Panc1 (cell line): ENCODE measurements at regions of chr1 and their contacts with region 1.

Region 1: GRCh38 chr1:169853341-169853740 is 40.4 kb downstream of the SCYL3 start:
- DNase-seq: no peak
- ATAC-seq: no peak
- H3K4me3 ChIP-seq: no peak overlapping the region
- H3K27ac ChIP-seq: no peak overlapping the region
- H3K4me1 ChIP-seq: no peaks in the 10 kb centered on the region
- H3K27me3 ChIP-seq: no peaks in the 10 kb centered on the region
- CTCF ChIP-seq: no peak

Region 2: DNA sequence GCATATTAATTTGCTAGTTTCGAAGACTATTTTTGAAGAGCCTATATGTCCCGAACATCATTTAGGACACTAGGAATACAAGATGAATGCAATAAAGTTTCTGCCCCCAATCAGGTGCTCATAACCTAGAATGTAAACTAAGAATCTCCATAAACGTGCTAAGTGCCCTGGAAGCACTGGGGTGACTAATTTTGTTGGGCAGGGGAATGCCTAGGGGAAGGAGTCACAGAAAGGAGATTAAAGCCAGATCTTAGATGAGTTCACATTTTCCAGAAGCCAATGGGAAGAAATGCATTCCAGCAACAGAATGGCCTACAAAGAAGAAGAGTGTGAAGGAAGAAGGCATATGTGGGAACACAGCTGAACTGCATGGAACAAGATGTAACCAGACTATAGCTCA is 20.9 kb after region 1 on chr1:
- CTCF ChIA-PET with region 1: no interaction called
- POLR2A ChIA-PET with region 1: no interaction called
- in situ Hi-C with region 1: no loop called
- intact Hi-C with region 1: no loop called
- DNase-seq: no peak
- ATAC-seq: no peak
- H3K4me3 ChIP-seq: no peak overlapping the region
- H3K27ac ChIP-seq: no peak overlapping the region
- H3K4me1 ChIP-seq: no peaks in the 10 kb centered on the region
- H3K27me3 ChIP-seq: no peaks in the 10 kb centered on the region
- CTCF ChIP-seq: no peak

Region 3: DNA sequence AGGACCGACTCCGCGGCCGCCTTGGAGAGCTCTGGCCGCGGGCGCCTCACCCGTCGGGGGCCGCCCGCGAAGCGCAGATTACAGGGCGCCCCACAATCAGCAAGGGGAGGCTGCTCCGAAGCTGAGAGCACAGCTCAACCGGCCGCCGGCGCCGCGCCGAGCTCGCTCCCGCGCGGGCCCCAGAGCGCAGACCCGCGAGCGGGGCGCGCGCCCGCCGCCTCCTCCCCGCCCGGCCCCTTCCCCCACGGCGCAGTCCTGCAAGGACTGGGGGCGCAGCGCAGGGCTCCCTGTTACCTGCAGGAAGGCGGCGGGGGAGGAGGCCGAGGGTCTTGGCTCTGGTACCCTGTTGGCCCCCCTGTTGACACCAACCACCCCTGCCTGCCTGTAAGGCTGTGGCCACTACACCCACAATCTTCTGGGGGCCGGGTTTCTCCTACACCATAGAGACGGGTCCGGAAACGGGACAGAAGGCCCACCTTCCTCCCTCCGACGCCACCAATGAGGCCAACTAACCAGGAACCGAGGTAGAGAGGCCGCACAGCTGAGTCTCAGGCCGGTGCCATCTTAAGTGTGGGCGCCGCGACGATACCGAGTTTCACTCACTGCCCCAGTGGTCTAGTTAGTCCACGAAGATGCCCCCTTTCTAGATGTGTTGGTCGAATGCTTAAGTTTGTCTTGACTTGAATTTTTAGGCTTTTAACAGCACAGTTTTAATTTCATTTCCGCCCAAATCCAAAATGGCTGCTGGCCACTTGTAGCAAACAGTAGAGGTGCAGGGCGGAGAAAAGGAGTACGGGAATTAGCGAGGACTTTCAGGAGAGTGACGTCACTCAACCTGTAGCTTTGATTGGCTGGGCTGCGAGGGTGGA is 40.4 kb after region 1 on chr1 and contains the start of gene SCYL3:
- CTCF ChIA-PET with region 1: no interaction called
- POLR2A ChIA-PET with region 1: interaction called, 14 read pairs
- in situ Hi-C with region 1: no loop called
- intact Hi-C with region 1: no loop called
- DNase-seq: peak; percentile 95
- ATAC-seq: peak; percentile 98
- H3K4me3 ChIP-seq: peak within 1 kb of the TSS; percentile 73 to 92
- H3K27ac ChIP-seq: peak within 1 kb of the TSS; percentile 100
- H3K4me1 ChIP-seq: peaks cover 26% of the 10 kb centered on the region
- H3K27me3 ChIP-seq: no peaks in the 10 kb centered on the region; the same call in 1 of the 2 replicates
- CTCF ChIP-seq: no peak
- total RNA-seq, gene SCYL3: 7.8 TPM